ENCODE measurements at regions of chr14 and their contacts with region 1.

Region 1: DNA sequence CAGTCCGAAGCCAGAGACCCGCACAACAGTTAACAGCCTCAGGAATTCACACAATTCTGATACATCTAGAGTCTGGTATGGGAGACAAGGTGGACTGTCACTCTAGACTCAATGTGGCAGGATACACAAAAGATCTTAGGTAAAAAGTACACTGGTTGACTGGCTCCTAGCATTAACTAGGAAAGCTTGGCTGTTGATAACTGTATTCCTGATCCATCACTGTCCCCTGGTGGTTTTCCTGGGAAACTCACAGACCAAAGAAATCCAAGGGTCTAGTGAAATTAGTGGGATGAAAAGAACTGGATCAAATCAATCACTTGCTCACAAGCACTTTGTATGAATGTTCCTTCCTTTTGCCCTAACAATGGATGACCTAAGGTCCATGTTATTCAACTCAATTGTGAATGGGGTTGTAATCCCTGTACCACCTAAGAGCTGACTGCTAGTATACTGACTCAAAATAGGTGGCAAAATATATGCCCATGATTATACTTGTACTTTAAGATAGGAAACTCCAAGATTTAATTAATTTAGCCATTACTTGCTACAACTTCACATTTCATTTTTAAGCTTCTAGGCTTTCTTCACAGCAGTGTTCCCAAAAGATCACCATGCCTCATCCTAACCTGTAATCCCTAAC is 14.0 kb downstream of the NPC2 start:
- DNase-seq: no peak
- H3K4me3 ChIP-seq: no peak overlapping the region
- H3K27me3 ChIP-seq: no peaks in the 10 kb centered on the region
- CTCF ChIP-seq: peak; percentile 80

Region 2: DNA sequence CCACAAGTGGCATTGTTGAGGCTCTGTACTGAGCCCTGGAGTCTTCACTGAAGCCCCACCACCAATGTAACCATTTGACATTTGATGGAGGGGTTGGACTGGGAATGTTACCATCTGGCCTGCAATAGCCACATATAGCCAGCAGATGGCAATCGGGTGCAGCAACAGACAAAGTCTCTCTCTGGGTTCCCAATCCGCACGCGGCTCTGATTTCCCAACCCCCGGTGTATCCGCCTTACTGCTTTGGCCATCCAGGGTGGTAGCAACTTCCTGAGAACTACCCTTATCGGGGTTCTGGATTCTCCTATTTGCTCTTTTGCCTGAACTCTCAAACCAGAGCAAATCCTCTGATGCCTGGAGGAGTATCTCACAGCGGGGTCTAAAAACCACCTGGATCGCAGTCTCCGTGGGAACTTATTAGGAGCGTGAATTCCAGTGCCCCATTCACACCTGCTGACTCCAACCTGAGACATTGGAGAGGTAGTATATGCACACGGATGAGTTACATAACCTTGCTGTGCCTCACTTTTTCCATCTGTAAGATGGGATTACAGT is 116.7 kb before region 1 on chr14:
- CTCF ChIA-PET with region 1: interaction called, 37 read pairs
- POLR2A ChIA-PET with region 1: no interaction called
- DNase-seq: peak; percentile 9
- H3K4me3 ChIP-seq: no peak overlapping the region
- H3K27me3 ChIP-seq: peaks cover 16% of the 10 kb centered on the region
- CTCF ChIP-seq: peak; percentile 94

Region 3: GRCh38 chr14:74368846-74369245 is 110.3 kb before region 1 on chr14:
- CTCF ChIA-PET with region 1: interaction called, 37 read pairs
- POLR2A ChIA-PET with region 1: no interaction called
- DNase-seq: no peak
- H3K4me3 ChIP-seq: no peak overlapping the region
- H3K27me3 ChIP-seq: peaks cover 10% of the 10 kb centered on the region
- CTCF ChIP-seq: no peak

Region 4: DNA sequence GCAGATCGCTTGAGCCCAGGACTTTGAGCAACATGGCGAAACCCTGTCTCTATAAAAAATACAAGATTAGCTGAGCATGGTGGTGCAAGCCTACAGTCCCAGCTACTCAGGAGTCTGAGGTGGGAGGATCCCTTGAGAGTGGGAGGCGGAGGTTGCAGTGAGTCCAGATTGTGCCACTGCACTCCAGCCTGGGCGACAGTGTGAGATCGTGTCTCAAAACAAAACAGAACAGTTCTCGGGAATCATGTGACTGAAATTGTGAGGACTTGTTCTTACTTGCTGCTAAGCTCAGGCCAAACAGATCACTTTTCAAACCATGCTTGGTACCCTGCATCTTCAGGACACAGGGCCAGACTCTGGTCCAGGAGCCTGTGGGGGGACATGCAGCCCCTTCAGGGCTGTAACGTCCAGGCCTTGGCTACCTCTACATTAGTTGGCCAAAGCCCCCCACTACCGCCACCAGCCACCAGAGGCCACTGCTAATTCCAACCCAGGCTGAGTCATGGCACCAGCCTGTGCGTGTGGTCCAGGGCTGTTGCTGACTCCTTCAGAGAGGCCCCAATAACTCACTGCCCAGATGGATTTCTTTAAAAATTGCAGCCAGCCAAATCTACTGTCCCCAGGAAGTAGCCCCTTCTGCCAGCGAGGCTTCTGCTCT is 19.7 kb before region 1 on chr14:
- CTCF ChIA-PET with region 1: interaction called, 55 read pairs
- POLR2A ChIA-PET with region 1: no interaction called
- DNase-seq: peak; percentile 11
- H3K4me3 ChIP-seq: no peak overlapping the region
- H3K27me3 ChIP-seq: peaks cover 2% of the 10 kb centered on the region
- CTCF ChIP-seq: peak; percentile 85

Measured in BJ (cell line).